WTC11 (cell line): ENCODE measurements at regions of chr1 and their contacts with region 1.

Region 1: GRCh38 chr1:3423245-3423829 is 31.1 kb upstream of the ARHGEF16 start:
- DNase-seq: no peak
- ATAC-seq: no peak
- H3K4me3 Mint-ChIP-seq: no peak overlapping the region
- H3K27ac Mint-ChIP-seq: no peak overlapping the region
- H3K4me1 Mint-ChIP-seq: no peaks in the 10 kb centered on the region
- H3K27me3 Mint-ChIP-seq: 0 out of 2 replicates have a peak, but pooled peaks cover 4% of the 10 kb centered on the region
- CTCF ChIP-seq: no peak

Region 2: DNA sequence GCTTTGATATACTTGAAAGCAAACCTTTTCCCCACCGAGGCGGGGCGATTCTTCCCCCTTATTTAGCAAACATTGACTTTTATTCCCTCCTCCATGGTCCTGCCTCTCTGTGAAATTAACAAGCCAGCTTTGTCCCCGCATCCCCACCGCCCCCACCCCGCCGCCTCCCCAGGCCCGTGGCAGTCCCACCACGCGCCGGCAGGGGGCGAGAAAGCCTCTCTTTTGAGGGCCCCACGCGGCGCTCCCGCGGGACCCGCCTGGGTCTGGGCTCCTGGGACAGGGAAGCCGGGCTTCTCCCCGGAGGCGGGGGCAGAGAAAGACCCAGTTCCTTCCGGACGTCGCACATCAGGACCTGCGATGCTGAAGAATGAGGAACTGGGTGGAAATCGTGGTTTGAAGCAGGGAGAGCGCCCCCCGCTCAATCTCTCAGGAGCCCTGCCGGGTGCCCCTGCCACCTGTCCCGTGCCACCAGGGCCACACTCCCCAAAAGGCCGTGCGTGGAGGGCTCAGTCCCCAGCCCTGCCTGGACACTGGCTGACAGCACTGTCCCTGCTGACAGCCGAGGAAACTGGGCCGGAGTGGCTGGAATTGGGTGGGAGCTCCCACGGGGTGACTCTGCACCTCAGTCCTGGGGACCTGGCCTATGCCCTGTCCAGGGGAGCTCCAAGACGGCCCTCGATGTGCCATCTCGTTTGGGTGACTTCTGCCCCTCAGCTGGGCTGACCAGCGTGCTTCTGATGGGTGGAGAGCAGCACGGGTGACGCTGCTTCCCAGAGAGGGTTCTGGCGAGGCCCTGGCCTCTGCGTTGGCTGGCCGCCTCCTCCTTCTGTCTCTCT is 410.7 kb before region 1 on chr1:
- CTCF ChIA-PET with region 1: interaction called, 22 read pairs
- POLR2A ChIA-PET with region 1: interaction called, 3 read pairs
- DNase-seq: peak; percentile 77
- ATAC-seq: peak; percentile 82
- H3K4me3 Mint-ChIP-seq: no peak overlapping the region
- H3K27ac Mint-ChIP-seq: no peak overlapping the region
- H3K4me1 Mint-ChIP-seq: peaks cover 12% of the 10 kb centered on the region
- H3K27me3 Mint-ChIP-seq: peaks cover 20% of the 10 kb centered on the region
- CTCF ChIP-seq: peak; percentile 80

Region 3: GRCh38 chr1:3066250-3066711 is 357.1 kb before region 1 on chr1:
- CTCF ChIA-PET with region 1: interaction called, 22 read pairs
- POLR2A ChIA-PET with region 1: no interaction called
- DNase-seq: peak; percentile 61
- ATAC-seq: no peak
- H3K4me3 Mint-ChIP-seq: no peak overlapping the region
- H3K27ac Mint-ChIP-seq: no peak overlapping the region
- H3K4me1 Mint-ChIP-seq: peaks cover 5% of the 10 kb centered on the region; the same call in 1 of the 2 replicates
- H3K27me3 Mint-ChIP-seq: peaks cover 86% of the 10 kb centered on the region
- CTCF ChIP-seq: no peak

Region 4: DNA sequence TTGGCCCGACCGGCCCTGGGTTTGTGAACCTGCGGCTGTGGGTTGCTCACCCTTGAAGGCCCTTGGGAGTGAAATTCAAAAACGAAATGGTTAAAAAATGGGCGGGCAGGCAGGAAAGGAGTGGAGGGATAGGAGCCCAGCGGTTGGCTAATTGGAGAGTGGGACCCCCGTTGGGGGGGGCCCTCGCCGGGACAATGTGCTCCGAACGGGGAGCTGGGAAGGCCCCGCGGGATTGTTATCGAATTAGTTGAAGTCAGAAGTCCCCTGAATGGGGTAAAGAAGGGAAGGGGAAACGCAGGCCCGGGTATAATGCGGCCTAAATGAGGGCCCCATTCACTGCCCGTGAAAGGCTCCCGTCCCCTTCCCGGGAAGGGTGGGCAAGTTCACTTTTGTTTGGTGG is 218.6 kb before region 1 on chr1:
- CTCF ChIA-PET with region 1: no interaction called
- POLR2A ChIA-PET with region 1: no interaction called
- DNase-seq: no peak
- ATAC-seq: no peak
- H3K4me3 Mint-ChIP-seq: no peak overlapping the region
- H3K27ac Mint-ChIP-seq: peak overlapping the region; percentile 77
- H3K4me1 Mint-ChIP-seq: peaks cover 10% of the 10 kb centered on the region
- H3K27me3 Mint-ChIP-seq: no peaks in the 10 kb centered on the region
- CTCF ChIP-seq: no peak

Region 5: DNA sequence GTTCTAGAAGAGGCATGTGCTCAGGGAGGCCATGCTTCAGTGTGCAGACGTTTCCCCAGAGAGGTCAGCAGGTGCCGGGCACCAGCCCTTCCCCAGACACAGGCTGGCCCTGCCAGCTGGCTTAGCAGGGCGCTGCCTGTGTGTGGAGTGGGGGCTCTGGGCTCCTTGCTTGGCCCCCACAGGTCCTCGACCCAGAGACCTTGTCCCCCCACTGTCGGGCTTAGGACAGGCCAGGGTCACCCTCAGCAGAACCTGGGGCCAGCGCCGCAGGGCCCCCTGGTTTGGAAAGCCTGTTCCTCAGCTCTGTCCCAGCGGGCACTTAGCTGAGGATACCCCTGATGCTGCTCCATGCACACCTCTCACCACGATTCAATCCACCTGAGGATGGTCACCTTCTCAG is 141.2 kb before region 1 on chr1:
- CTCF ChIA-PET with region 1: interaction called, 11 read pairs
- POLR2A ChIA-PET with region 1: no interaction called
- DNase-seq: no peak
- ATAC-seq: no peak
- H3K4me3 Mint-ChIP-seq: no peak overlapping the region
- H3K27ac Mint-ChIP-seq: no peak overlapping the region
- H3K4me1 Mint-ChIP-seq: peaks cover 14% of the 10 kb centered on the region
- H3K27me3 Mint-ChIP-seq: no peaks in the 10 kb centered on the region
- CTCF ChIP-seq: no peak

Region 6: GRCh38 chr1:3352299-3352951 is 70.9 kb before region 1 on chr1:
- CTCF ChIA-PET with region 1: interaction called, 21 read pairs
- POLR2A ChIA-PET with region 1: no interaction called
- DNase-seq: peak; percentile 52
- ATAC-seq: peak; percentile 57
- H3K4me3 Mint-ChIP-seq: peak overlapping the region; percentile 66
- H3K27ac Mint-ChIP-seq: peak overlapping the region; percentile 83; the same call in 1 of the 2 replicates
- H3K4me1 Mint-ChIP-seq: peaks cover 21% of the 10 kb centered on the region
- H3K27me3 Mint-ChIP-seq: no peaks in the 10 kb centered on the region
- CTCF ChIP-seq: no peak

Region 7: GRCh38 chr1:3403388-3404231 is 19.7 kb before region 1 on chr1:
- CTCF ChIA-PET with region 1: interaction called, 17 read pairs
- POLR2A ChIA-PET with region 1: no interaction called
- DNase-seq: peak; percentile 71
- ATAC-seq: peak; percentile 89
- H3K4me3 Mint-ChIP-seq: no peak overlapping the region
- H3K27ac Mint-ChIP-seq: no peak overlapping the region
- H3K4me1 Mint-ChIP-seq: no peaks in the 10 kb centered on the region
- H3K27me3 Mint-ChIP-seq: no peaks in the 10 kb centered on the region
- CTCF ChIP-seq: peak; percentile 19; the same call in 1 of the 2 replicates

Region 8: GRCh38 chr1:3434406-3435110 is 11.2 kb after region 1 on chr1:
- CTCF ChIA-PET with region 1: no interaction called
- POLR2A ChIA-PET with region 1: no interaction called
- DNase-seq: no peak
- ATAC-seq: no peak
- H3K4me3 Mint-ChIP-seq: no peak overlapping the region
- H3K27ac Mint-ChIP-seq: no peak overlapping the region
- H3K4me1 Mint-ChIP-seq: peaks cover 3% of the 10 kb centered on the region; the same call in 1 of the 2 replicates
- H3K27me3 Mint-ChIP-seq: no peaks in the 10 kb centered on the region
- CTCF ChIP-seq: no peak

Region 9: GRCh38 chr1:3676581-3677470 is 253.5 kb after region 1 on chr1:
- CTCF ChIA-PET with region 1: no interaction called
- POLR2A ChIA-PET with region 1: no interaction called
- DNase-seq: no peak
- ATAC-seq: no peak
- H3K4me3 Mint-ChIP-seq: no peak overlapping the region
- H3K27ac Mint-ChIP-seq: no peak overlapping the region
- H3K4me1 Mint-ChIP-seq: peaks cover 29% of the 10 kb centered on the region
- H3K27me3 Mint-ChIP-seq: no peaks in the 10 kb centered on the region; the same call in 1 of the 2 replicates
- CTCF ChIP-seq: no peak